ENCODE measurements at regions of chr3 and their contacts with region 1.

Region 1: GRCh38 chr3:54830658-54831057 is 97.2 kb downstream of the LRTM1 start:
- DNase-seq: no peak
- ATAC-seq: no peak

Region 2: GRCh38 chr3:55349851-55350450 is 519.3 kb after region 1 on chr3:
- intact Hi-C with region 1: loop called (anchors 5 kb)
- DNase-seq: no peak
- ATAC-seq: no peak